Right ventricle myocardium superior (tissue), 1 donor: ENCODE measurements at regions of chr3 and their contacts with region 1.

Region 1: DNA sequence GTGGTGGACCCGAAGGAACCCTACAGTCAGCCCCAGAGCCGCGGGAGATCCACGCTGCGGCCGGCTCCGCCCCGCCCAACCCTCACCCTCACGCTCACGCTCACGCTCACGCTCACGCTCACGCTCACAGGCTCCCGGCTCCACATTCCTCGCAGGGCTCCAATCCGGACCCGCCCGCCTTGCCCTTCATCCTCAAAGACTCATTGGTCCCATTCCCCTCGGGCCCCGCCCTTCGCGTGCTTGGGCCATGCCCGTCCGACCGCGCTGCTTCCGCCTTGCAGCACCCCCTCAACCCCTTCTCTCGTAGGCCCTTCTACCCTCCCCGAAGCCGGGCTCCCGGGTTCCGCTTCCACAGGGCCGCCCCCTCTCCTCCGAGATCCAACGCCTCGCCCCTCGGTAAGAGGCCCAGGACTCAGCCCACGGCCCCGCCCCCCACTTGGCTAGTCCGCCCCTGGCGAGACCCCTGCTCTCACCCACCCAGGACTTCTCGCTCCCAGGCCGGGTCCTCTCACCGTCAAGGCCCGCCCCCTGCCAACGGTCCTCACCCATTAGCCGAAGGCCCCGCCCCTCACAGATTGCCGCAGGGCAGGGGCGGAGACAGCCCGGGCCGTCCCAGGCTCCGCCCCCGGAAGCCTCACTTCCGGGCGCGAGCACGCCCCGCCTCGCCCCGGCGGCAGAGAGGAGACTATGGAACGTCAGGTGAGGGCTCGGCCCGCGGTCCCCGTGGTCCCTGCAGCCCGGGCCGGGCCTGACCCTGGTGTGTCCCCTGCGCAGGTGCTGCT is at the start of gene APEH:
- DNase-seq: peak; percentile 98
- ATAC-seq: peak; percentile 95
- total RNA-seq, gene APEH: 103 TPM

Region 2: DNA sequence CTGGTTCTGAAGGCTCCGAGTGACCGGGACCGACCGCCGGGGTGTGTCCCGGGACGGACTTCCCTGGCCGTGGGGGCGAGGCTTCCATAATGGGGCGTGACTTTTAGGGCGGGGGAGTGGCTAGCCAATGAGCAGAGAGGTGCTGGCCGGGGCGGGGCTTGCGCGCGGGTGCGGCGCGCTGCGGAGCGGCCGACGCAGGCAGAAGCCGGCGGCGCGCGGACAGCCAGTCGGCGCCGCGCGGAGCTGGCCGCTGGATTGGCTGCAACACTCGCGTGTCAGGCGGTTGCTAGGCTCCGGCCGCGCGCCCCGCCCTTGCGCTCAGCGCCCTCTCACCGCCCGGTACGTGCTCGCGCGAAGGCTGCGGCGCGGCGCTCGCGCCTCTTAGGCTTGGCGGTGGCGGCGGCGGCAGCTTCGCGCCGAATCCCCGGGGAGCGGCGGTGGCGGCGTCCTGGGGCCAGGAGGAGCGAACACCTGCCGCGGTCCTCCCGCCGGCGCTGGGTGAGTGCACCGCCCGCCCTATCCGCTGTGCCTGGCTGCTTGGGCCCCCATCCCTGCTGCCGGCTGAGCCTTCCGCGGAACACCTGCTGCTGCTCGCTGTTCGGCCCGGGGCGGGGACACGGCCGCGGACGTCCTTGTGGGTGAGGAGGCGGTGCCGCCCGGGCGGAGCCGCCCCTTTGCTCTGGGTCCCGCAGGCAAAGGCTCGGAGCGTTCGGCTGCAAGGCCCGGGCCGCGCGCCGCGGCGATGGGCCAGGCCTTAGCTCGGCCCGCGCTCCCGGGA is 203.8 kb before region 1 on chr3 and contains the start of gene DAG1:
- intact Hi-C with region 1: loop called (anchors 10 kb)
- DNase-seq: peak; percentile 99
- ATAC-seq: peak; percentile 88
- total RNA-seq, gene DAG1: 122 TPM

Region 3: DNA sequence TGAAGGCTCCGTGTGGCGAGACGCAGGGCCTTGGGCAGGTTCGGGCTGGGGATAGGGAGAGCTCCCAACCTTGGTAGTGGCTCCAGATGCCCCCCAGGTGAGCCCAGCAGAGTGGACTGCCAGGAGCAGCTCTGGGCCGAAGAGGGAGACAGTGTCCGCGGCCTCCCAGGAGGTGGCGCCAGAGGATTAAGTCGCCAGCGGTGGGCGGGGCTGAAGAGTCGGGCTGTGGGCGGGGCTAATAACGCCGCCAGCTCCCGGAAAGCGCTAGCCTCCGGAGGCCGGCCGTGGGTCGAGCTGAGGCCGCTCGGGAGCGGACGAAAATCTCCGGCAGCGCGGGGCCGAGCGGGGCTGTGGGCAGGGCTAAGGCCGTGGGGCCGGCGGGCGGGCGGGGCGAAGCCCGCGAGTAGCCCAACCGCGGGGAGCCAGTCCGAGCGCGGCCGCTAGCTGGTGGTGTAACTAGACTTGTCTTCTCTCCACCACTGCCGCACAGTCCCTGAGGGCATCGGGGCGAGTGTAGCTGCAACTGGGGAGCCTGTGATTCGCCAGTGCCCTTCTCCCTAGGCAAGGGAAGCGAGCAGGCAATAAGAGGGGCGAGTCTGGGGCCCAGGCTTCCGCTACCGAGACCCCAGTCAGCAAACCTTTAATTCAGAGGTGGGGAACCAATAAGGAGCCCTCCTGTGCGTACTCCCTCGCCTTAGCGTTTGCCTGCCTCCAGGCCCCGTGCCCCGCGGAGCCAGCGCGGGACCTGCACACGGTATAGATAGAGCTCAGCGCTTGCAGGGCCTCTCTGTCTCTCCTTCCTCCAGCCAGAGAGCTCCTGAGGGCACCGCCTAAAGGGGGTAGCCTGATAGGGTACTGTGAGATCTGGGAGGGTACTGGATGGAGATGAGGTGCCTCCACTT is 134.0 kb before region 1 on chr3:
- intact Hi-C with region 1: loop called (anchors 5 kb)
- DNase-seq: peak; percentile 96
- ATAC-seq: peak; percentile 99

Region 4: DNA sequence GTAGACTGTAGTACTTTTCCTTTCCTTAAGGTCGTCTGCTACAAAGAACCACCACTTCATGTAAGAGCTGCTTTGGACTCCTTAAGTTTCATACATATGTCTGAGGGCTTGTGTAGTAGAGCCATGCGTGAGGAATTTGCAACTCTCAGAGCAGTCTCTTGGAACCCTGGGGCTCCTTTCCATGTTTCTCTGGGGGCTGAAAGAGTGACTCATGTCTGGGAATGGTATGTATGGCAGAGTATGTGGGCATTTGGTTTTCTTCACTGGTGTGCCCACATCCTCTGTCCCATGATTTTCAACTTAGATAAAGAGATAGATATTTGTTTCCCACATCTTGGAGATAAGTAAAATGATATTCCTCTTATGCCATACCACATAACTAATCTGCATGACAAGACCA is 394.2 kb after region 1 on chr3:
- intact Hi-C with region 1: no loop called
- DNase-seq: no peak
- ATAC-seq: no peak

Region 5: GRCh38 chr3:50146316-50146901 is 472.5 kb after region 1 on chr3:
- intact Hi-C with region 1: no loop called
- DNase-seq: no peak
- ATAC-seq: no peak